ENCODE measurements at regions of chr9 and their contacts with region 1.

Region 1: DNA sequence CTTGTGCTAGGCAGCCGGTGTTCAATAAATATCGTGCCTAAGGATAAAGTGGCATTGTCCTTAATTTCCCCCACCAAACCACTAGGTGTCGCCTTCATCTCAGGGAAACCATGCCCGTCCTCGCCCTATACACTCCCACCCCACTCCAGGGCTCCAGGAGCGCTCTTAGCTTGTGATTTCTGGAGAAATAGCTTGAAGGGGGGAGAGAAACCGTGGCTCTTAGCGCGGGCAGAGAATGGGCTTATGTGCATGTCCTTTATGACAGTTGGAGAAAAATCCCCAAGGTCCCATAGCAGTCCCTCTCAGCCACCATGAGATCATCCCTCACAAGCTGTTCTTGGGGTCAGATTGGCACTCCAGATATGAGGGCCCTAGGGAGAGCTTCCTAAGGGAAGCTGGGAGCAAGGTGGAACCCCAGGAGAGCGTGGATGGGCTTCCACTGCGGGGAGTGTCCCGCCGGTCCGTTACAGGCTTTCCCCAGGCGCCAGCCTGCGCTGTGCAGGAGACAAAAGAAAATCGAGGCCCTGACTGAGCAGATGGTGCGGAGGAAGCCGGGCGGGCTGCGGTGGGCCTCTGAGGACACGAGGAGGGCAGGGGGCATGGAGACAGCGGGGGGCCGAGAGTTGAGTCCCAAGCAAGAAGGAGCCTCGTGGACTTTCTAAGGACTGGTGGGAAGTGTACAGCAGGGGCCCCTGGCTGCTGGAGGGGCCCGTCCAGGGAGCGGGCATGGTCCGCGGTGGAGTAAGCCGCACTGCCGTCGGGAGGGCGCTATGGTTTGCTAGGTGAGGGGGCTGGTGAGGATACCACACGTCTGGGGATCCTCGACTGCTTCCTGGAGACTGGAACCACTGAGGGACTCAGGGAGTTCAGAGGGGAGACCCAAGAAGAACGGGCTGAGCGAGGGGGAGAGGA is 750 bp upstream of the NPR2 start:
- DNase-seq: peak; percentile 31
- H3K4me3 ChIP-seq: peak overlapping the region; percentile 42
- CTCF ChIP-seq: peak; percentile 82

Region 2: GRCh38 chr9:35690431-35691333 is 100.0 kb before region 1 on chr9:
- CTCF ChIA-PET with region 1: no interaction called
- POLR2A ChIA-PET with region 1: no interaction called
- DNase-seq: no peak
- H3K4me3 ChIP-seq: peak overlapping the region; percentile 97
- CTCF ChIP-seq: no peak

Region 3: GRCh38 chr9:35716230-35716629 is 74.4 kb before region 1 on chr9:
- CTCF ChIA-PET with region 1: no interaction called
- POLR2A ChIA-PET with region 1: no interaction called
- DNase-seq: no peak
- H3K4me3 ChIP-seq: no peak overlapping the region
- CTCF ChIP-seq: no peak

Region 4: GRCh38 chr9:35756275-35757225 is 34.1 kb before region 1 on chr9:
- CTCF ChIA-PET with region 1: interaction called, 12 read pairs
- POLR2A ChIA-PET with region 1: no interaction called
- DNase-seq: no peak
- H3K4me3 ChIP-seq: peak overlapping the region; percentile 41
- CTCF ChIP-seq: peak; percentile 53

Region 5: GRCh38 chr9:35820076-35820475 is 29.4 kb after region 1 on chr9:
- CTCF ChIA-PET with region 1: interaction called, 201 read pairs
- POLR2A ChIA-PET with region 1: no interaction called
- DNase-seq: no peak
- H3K4me3 ChIP-seq: no peak overlapping the region
- CTCF ChIP-seq: no peak

Region 6: GRCh38 chr9:35891646-35892045 is 101.0 kb after region 1 on chr9:
- CTCF ChIA-PET with region 1: interaction called, 14 read pairs
- POLR2A ChIA-PET with region 1: no interaction called
- DNase-seq: no peak
- H3K4me3 ChIP-seq: no peak overlapping the region
- CTCF ChIP-seq: no peak

Region 7: DNA sequence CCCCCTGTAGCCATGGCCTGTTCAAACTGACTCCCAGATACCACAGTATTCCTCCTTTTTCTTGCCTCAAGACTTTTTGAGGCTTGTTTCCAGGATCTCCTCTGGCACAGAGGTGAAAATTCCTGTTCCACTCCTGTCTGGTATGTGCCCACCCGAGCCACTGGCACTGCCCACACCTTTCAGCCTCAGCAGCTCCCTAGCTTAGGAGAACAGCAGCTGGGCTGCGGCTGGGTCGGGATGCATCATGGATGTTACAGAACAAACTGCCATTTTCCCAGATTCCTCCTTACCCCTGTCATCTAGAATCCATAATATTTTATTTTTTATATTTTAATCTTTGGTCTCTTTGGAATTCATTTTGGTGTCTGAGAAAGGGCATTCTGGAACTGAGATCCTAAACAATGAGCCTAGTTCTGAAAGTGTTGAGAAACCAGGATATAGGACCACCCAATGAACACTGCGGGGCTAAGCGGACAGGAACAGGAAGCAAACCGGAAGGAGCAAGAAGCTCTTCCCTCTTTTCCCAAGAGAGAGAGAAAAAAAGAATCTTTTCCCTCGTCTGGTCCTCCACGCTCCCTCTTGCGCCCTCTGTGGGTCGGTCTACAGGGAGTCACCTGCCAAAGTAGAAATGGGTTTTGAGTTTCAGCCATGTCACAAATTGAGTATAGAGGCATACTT is 154.8 kb after region 1 on chr9:
- CTCF ChIA-PET with region 1: interaction called, 24 read pairs
- POLR2A ChIA-PET with region 1: no interaction called
- DNase-seq: no peak
- H3K4me3 ChIP-seq: no peak overlapping the region
- CTCF ChIP-seq: peak; percentile 86